Cardiac septum (tissue), 1 donor: ENCODE measurements at regions of chr14 and their contacts with region 1.

Region 1: GRCh38 chr14:23306410-23307145 is at the start of gene BCL2L2:
- DNase-seq: peak; percentile 92
- total RNA-seq, gene BCL2L2: 48.2 TPM

Region 2: DNA sequence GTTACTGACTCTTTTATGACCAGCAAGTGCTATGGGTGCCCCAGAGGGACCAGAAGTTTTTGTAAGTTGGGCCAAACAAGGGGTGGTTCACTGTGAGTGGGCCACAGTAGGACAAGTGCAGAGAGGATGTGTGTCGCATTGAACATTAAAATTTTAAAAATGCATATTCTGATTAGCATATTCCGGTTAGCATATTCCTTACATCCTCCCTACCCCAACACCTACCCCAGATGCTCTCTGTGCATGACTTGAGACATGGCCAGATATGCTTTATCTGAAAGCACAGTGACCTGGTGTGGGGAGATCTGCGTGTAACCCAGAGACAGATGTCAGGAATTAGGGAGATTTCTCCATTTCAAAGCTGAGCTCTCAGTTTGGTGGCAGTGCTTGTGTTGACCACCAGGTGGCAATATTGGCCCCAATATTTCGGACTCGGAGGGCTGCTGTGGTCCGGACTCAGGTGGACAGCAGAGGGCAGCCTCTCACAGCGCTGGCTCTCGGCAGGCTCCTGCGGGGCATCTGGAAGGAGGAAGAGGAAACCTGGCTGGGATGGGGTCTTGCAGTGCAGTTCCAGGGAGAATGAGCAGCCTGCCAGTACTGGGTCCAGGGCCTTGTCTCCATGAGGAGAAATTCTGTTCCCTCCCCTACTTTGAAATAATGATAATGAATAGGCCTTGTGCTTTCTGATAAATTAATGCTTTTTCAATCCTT is 185.9 kb before region 1 on chr14:
- intact Hi-C with region 1: no loop called
- DNase-seq: peak; percentile 96

Region 3: GRCh38 chr14:23320774-23321571 is 14.4 kb after region 1 on chr14 and contains the start of gene PABPN1:
- intact Hi-C with region 1: loop called (anchors 2 kb)
- DNase-seq: peak; percentile 99
- total RNA-seq, gene PABPN1: 82.9 TPM

Region 4: GRCh38 chr14:23345987-23346692 is 39.6 kb after region 1 on chr14:
- intact Hi-C with region 1: no loop called
- DNase-seq: no peak

Region 5: GRCh38 chr14:23469127-23469905 is 162.7 kb after region 1 on chr14 and contains the start of gene NGDN:
- intact Hi-C with region 1: loop called (anchors 2 kb)
- DNase-seq: peak; percentile 97
- total RNA-seq, gene NGDN: 16.2 TPM